Activated CD4-positive, alpha-beta T cell treated with anti-CD3 and anti-CD28 coated beads for 36 hours (primary cell): ENCODE measurements at regions of chr14 and their contacts with region 1.

Region 1: DNA sequence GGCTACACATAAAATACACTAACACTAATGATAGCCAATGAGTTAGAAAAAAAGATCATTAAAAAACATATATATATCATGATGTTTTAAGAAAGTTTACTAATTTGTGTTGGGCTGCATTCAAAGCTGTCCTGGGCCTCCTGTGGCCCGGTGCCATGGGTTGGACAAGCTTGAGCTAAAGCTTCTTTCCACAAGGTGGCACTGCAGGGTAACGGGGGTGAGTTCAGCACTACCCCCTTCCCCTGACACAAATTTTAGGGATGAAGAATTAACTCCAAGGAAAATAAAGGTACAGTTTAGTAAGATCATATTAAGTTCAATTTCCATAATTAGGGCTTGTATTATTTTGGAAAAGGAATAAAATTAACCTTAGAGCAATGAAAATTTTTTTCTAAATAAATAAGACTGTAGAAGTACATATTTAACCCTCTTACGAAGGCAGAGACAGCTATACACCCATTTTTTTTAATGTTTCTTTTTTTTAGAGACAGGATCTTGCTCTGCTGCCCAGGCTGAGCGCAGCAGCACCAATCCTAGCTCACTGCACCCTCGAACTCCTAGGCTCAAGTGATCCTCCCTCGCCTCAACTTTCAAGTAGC is 38.9 kb downstream of the PPP1R13B start:
- DNase-seq: peak; percentile 82
- ATAC-seq: peak; percentile 91
- H3K4me3 Mint-ChIP-seq: no peak overlapping the region
- H3K27ac Mint-ChIP-seq: no peak overlapping the region
- H3K4me1 Mint-ChIP-seq: peaks cover 15% of the 10 kb centered on the region
- H3K27me3 Mint-ChIP-seq: no peaks in the 10 kb centered on the region

Region 2: GRCh38 chr14:103819503-103820307 is 11.2 kb after region 1 on chr14:
- CTCF ChIA-PET with region 1: interaction called, 41 read pairs
- POLR2A ChIA-PET with region 1: interaction called, 3 read pairs
- intact Hi-C with region 1: no loop called
- DNase-seq: no peak
- ATAC-seq: no peak
- H3K4me3 Mint-ChIP-seq: no peak overlapping the region
- H3K27ac Mint-ChIP-seq: peak overlapping the region; percentile 1
- H3K4me1 Mint-ChIP-seq: peaks cover 41% of the 10 kb centered on the region
- H3K27me3 Mint-ChIP-seq: no peaks in the 10 kb centered on the region

Region 3: GRCh38 chr14:103871596-103872480 is 63.3 kb after region 1 on chr14:
- CTCF ChIA-PET with region 1: interaction called, 4 read pairs
- POLR2A ChIA-PET with region 1: no interaction called
- intact Hi-C with region 1: loop called in 1 of 2 experiments (anchors 1 kb)
- DNase-seq: peak; percentile 85
- ATAC-seq: peak; percentile 86
- H3K4me3 Mint-ChIP-seq: peak overlapping the region; percentile 79
- H3K27ac Mint-ChIP-seq: peak overlapping the region; percentile 79
- H3K4me1 Mint-ChIP-seq: peaks cover 12% of the 10 kb centered on the region
- H3K27me3 Mint-ChIP-seq: no peaks in the 10 kb centered on the region

Region 4: DNA sequence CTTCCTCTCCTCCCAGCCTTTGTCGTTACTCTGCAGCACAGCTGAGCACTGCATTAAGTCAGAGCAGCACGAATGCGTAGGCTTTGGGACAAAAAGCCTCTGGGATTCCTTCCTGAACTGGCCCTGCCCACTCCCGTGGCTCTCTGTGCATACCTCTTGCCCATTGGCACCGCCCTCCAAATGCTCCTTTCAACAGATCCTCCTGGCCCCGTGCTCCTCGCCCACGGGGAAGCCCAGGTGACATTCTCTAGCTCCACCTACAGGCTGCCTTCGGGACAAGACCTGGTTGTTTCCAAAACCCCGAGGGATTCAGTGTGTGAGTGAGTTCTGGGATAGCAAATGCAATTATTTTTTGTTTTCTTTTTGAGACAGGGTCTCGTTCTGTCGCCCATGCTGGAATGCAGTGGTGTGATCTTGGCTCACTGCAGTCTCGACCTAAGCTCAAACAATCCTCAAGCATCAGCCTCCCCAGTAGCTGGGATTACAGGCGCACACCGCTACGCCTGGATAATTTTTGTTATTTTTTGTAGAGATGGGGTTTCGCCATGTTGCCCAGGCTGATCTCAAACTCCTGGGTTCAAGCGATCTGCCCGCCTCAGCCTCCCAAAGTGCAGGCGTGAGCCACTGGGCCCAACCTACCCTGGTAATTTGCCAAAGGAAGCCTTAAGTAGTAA is 101.9 kb after region 1 on chr14:
- CTCF ChIA-PET with region 1: interaction called, 31 read pairs
- POLR2A ChIA-PET with region 1: no interaction called
- intact Hi-C with region 1: loop called (anchors 1 kb)
- DNase-seq: peak; percentile 88
- ATAC-seq: peak; percentile 92
- H3K4me3 Mint-ChIP-seq: peak overlapping the region; percentile 17
- H3K27ac Mint-ChIP-seq: peak overlapping the region; percentile 76
- H3K4me1 Mint-ChIP-seq: peaks cover 19% of the 10 kb centered on the region
- H3K27me3 Mint-ChIP-seq: no peaks in the 10 kb centered on the region

Region 5: DNA sequence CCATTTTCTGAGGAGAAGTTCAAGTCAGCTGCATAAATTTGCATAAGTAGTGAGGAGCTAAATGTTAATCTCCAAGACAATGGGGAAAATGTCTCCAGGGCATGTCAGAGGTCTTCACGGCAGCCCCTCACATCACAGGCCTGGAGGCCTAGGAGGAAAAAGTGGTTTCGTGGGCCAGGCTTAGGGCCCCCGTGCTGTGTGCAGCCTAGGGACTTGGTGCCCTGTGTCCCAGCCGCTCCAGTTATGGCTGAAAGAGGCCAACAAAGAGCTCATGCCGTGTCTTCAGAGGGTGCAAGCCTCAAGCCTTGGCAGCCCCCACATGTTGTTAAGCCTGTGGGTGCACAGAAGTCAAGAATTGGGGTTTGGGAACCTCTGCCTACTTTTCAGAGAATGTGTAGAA is 175.7 kb after region 1 on chr14:
- CTCF ChIA-PET with region 1: interaction called, 7 read pairs
- POLR2A ChIA-PET with region 1: no interaction called
- intact Hi-C with region 1: loop called in 1 of 2 experiments (anchors 1 kb)
- DNase-seq: no peak
- ATAC-seq: no peak
- H3K4me3 Mint-ChIP-seq: no peak overlapping the region
- H3K27ac Mint-ChIP-seq: no peak overlapping the region
- H3K4me1 Mint-ChIP-seq: no peaks in the 10 kb centered on the region
- H3K27me3 Mint-ChIP-seq: peaks cover 19% of the 10 kb centered on the region

Region 6: DNA sequence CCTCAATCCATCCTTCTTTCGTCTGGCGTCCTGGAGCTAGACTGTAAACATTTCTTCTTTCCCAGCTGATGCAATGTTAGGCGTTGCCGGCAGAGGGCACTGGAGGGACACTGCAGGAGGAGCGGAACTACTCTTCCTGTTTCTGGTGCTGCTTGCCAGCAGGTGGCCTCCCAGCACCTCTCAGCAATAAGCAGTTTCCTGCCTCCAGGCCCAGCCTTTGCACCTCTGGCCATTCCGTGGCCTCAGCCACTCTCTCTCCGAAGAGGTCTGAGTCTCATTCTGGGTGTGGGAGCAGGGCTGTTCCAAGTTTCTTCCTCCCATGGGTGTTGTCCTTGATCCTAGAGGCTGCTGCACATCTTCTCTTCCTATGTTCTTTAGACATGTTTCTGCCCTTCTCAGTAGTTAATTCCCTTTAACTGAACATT is 269.5 kb after region 1 on chr14:
- CTCF ChIA-PET with region 1: interaction called, 5 read pairs
- POLR2A ChIA-PET with region 1: no interaction called
- intact Hi-C with region 1: loop called in 1 of 2 experiments (anchors 5 kb)
- DNase-seq: peak; percentile 92
- ATAC-seq: peak; percentile 98
- H3K4me3 Mint-ChIP-seq: no peak overlapping the region
- H3K27ac Mint-ChIP-seq: peak overlapping the region; percentile 47
- H3K4me1 Mint-ChIP-seq: peaks cover 15% of the 10 kb centered on the region
- H3K27me3 Mint-ChIP-seq: peaks cover 6% of the 10 kb centered on the region